CD8-positive, alpha-beta T cell (primary cell): ENCODE measurements at regions of chr1 and their contacts with region 1.

Region 1: GRCh38 chr1:45303582-45304310 is 22.9 kb upstream of the HPDL start:
- DNase-seq: peak; percentile 95 to 98 (median 98)
- ATAC-seq: peak; percentile 88
- H3K4me3 ChIP-seq: peak overlapping the region; percentile 85 to 93
- H3K4me3 Mint-ChIP-seq: peak overlapping the region; percentile 91
- H3K27ac ChIP-seq: peak overlapping the region; percentile 89 to 95
- H3K27ac Mint-ChIP-seq: peak overlapping the region; percentile 98
- H3K4me1 ChIP-seq: peaks cover 9% of the 10 kb centered on the region
- H3K4me1 Mint-ChIP-seq: peaks cover 23% of the 10 kb centered on the region
- H3K27me3 ChIP-seq: no peaks in the 10 kb centered on the region
- H3K27me3 Mint-ChIP-seq: no peaks in the 10 kb centered on the region
- CTCF ChIP-seq: peak; percentile 66

Region 2: DNA sequence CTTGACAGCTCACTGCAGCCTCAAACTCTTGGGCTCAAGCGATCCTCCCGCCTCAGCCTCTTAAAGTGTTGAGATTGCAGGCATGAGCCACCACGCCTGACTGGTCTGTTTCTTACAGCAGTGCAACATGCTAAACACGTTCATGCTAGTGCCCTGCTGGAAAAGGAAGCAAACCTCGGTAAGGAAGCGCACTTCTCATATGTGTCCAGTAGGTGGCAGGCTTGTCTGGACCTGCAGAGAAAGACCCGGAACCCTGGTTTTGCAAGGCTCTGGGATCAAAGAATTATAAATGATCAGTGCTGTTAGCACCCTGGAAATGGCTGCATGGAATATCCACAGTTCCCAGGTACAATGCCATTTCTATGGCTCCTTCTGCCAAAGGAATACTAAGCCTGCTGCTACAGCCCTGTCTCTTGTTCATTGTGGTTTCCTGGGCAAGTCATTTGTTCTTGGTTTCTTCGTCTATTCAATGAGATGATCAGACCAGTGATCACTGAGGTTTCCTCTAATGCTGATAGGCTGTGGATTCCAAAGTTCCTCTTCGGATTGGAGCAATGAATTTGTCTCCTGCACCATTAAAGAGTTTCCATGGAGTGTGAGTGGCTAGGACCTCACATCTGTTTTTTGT is 588.7 kb before region 1 on chr1:
- CTCF ChIA-PET with region 1: no interaction called
- POLR2A ChIA-PET with region 1: no interaction called
- intact Hi-C with region 1: loop called in 1 of 2 experiments (anchors 5 kb)
- DNase-seq: peak; percentile 37 to 87 (median 63)
- ATAC-seq: peak; percentile 94
- H3K4me3 ChIP-seq: peak overlapping the region in 1 of 2 experiments; percentile 1
- H3K4me3 Mint-ChIP-seq: peak overlapping the region; percentile 64
- H3K27ac ChIP-seq: no peak overlapping the region
- H3K27ac Mint-ChIP-seq: peak overlapping the region; percentile 37
- H3K4me1 ChIP-seq: peaks cover 44% of the 10 kb centered on the region
- H3K4me1 Mint-ChIP-seq: peaks cover 44% of the 10 kb centered on the region
- H3K27me3 ChIP-seq: no peaks in the 10 kb centered on the region
- H3K27me3 Mint-ChIP-seq: no peaks in the 10 kb centered on the region
- CTCF ChIP-seq: peak; percentile 96

Region 3: GRCh38 chr1:44786138-44786840 is 517.5 kb before region 1 on chr1:
- CTCF ChIA-PET with region 1: no interaction called
- POLR2A ChIA-PET with region 1: no interaction called
- intact Hi-C with region 1: loop called (anchors 1 to 2 kb)
- DNase-seq: peak in 8 of 9 experiments; percentile 63 to 89 (median 78)
- ATAC-seq: peak; percentile 85
- H3K4me3 ChIP-seq: peak overlapping the region; percentile 56 to 94
- H3K4me3 Mint-ChIP-seq: peak overlapping the region; percentile 82
- H3K27ac ChIP-seq: peak overlapping the region; percentile 33 to 63
- H3K27ac Mint-ChIP-seq: peak overlapping the region; percentile 86
- H3K4me1 ChIP-seq: peaks cover 34% of the 10 kb centered on the region
- H3K4me1 Mint-ChIP-seq: peaks cover 29% of the 10 kb centered on the region
- H3K27me3 ChIP-seq: no peaks in the 10 kb centered on the region
- H3K27me3 Mint-ChIP-seq: no peaks in the 10 kb centered on the region
- CTCF ChIP-seq: peak; percentile 100

Region 4: DNA sequence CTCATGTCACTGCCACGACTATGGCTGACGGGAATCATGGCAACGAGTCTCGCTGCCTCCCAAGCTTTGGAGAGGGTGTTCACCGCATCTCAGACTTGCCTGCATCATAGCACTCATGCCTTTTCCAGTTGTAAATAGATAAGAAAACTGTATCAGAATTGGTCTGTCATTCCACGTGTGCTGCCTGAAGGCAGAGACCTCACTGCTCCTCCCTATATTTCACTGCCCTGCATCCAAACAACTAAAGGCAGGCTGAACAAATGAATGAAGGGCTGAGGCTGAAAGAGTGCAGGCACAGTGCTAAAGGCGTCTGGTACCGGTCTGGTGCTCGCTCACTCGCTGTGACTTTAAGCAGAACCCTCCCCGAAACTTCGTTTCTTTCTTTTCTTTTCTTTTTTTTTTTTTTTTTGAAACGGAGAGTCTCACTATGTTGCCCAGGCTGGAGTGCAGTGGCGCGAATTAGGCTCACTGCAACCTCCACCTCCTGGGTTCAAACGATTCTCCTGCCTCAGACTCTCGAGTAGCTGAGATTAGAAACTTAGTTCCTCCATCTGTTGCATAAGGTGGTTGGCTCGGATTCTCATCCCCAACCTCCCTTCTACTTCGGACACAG is 317.9 kb before region 1 on chr1:
- CTCF ChIA-PET with region 1: interaction called, 5 read pairs
- POLR2A ChIA-PET with region 1: interaction called, 15 read pairs
- intact Hi-C with region 1: loop called (anchors 1 kb)
- DNase-seq: no peak
- ATAC-seq: no peak
- H3K4me3 ChIP-seq: peak overlapping the region; percentile 70 to 85
- H3K4me3 Mint-ChIP-seq: peak overlapping the region; percentile 97
- H3K27ac ChIP-seq: peak overlapping the region; percentile 31 to 42
- H3K27ac Mint-ChIP-seq: peak overlapping the region; percentile 93
- H3K4me1 ChIP-seq: peaks cover 15% of the 10 kb centered on the region
- H3K4me1 Mint-ChIP-seq: peaks cover 30% of the 10 kb centered on the region
- H3K27me3 ChIP-seq: no peaks in the 10 kb centered on the region
- H3K27me3 Mint-ChIP-seq: no peaks in the 10 kb centered on the region
- CTCF ChIP-seq: no peak

Region 5: DNA sequence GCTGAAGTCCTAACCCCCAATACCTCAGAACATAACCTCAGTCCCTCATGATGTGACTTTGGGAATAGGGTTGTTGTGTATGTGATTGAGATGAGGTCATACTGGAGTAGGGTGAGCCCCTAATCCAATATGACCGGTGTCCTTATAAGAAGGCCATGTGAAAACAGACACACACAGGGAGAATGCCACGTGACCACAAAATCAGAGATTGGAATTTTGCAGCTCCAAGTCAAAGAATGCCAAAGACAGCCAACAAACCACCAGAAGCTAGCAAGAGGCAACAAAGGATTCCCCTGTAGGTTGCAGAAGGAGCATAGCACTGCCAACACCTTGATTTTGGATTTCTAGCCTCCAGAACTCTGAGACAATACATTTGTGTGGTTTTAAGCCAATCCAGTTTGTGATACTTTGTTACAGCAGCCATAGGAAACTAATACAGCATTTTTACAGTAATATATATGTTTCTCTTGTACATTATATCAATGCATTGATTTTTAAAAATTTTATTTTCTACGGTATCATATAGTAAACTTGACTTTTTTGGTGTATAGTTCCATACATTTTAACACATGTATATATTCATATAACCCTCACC is 102.7 kb before region 1 on chr1:
- CTCF ChIA-PET with region 1: no interaction called
- POLR2A ChIA-PET with region 1: no interaction called
- intact Hi-C with region 1: loop called in 1 of 2 experiments (anchors 5 kb)
- DNase-seq: peak in 1 of 9 experiments; percentile 6
- ATAC-seq: no peak
- H3K4me3 ChIP-seq: no peak overlapping the region
- H3K4me3 Mint-ChIP-seq: no peak overlapping the region
- H3K27ac ChIP-seq: no peak overlapping the region
- H3K27ac Mint-ChIP-seq: no peak overlapping the region
- H3K4me1 ChIP-seq: peaks cover 20% of the 10 kb centered on the region
- H3K4me1 Mint-ChIP-seq: peaks cover 24% of the 10 kb centered on the region
- H3K27me3 ChIP-seq: no peaks in the 10 kb centered on the region
- H3K27me3 Mint-ChIP-seq: peaks cover 3% of the 10 kb centered on the region
- CTCF ChIP-seq: no peak

Region 6: DNA sequence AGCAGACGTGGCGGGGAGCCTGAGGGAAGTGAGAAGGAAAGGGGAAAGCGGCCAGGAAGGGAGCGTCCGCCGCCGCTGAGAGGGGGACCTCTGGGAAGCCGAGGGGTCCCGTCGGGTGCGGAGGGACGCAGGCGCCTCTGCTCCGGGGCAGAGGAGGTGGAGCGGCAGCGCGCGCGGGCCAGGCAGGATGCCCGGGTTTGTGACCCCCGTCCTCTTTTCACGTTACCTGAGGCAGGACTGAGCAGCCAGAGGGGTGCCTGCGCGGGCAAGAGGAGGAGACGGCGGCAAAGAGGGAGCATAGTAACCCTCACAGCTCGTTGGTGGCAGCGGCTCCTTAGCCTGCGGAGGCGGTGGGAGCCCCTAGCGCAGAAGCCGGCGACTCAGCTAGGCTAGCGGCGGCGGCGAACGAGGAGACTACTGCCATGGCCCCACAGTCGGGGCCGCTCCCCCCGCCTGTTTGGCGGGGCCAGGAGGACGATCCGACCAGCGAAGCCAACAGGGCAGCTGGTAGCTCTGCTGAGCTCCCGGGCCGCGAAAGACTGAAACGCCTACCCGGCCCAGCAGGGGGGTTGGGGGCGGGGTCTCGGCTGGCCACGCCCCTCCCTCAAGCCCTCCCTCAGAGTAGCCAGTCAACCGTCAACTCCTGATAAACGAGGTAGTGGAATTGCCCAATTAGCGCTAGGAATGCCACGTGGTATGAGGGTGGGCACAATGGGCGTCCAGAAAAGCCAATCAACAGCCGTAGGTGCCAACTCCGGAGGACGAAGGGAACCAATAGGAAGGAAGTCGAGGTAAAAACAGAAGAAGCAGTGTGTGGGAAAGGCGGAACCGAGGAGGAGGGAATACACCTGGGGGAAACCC is 187.1 kb after region 1 on chr1 and contains the start of gene TESK2:
- CTCF ChIA-PET with region 1: interaction called, 8 read pairs
- POLR2A ChIA-PET with region 1: interaction called, 5 read pairs
- intact Hi-C with region 1: loop called (anchors 1 kb)
- DNase-seq: peak; percentile 94 to 100 (median 95)
- ATAC-seq: peak; percentile 91
- H3K4me3 ChIP-seq: peak within 1 kb of the TSS; percentile 74 to 91
- H3K4me3 Mint-ChIP-seq: no peak within 1 kb of the TSS
- H3K27ac ChIP-seq: peak within 1 kb of the TSS; percentile 49 to 72
- H3K27ac Mint-ChIP-seq: no peak within 1 kb of the TSS
- H3K4me1 ChIP-seq: peaks cover 11% of the 10 kb centered on the region
- H3K4me1 Mint-ChIP-seq: peaks cover 16% of the 10 kb centered on the region
- H3K27me3 ChIP-seq: peaks cover 0 to 3% of the 10 kb centered on the region in 2 experiments
- H3K27me3 Mint-ChIP-seq: no peaks in the 10 kb centered on the region
- CTCF ChIP-seq: no peak
- total RNA-seq, gene TESK2: 4.6 to 5.8 TPM

Region 7: GRCh38 chr1:46197964-46198811 is 894.4 kb after region 1 on chr1 and contains the start of gene POMGNT1:
- CTCF ChIA-PET with region 1: no interaction called
- POLR2A ChIA-PET with region 1: no interaction called
- intact Hi-C with region 1: loop called (anchors 5 kb)
- DNase-seq: peak; percentile 50 to 86 (median 72)
- ATAC-seq: peak; percentile 93
- H3K4me3 ChIP-seq: peak within 1 kb of the TSS; percentile 75 to 93
- H3K4me3 Mint-ChIP-seq: peak within 1 kb of the TSS; percentile 83
- H3K27ac ChIP-seq: peak within 1 kb of the TSS; percentile 58 to 59
- H3K27ac Mint-ChIP-seq: peak within 1 kb of the TSS; percentile 88
- H3K4me1 ChIP-seq: peaks cover 20% of the 10 kb centered on the region
- H3K4me1 Mint-ChIP-seq: peaks cover 32% of the 10 kb centered on the region
- H3K27me3 ChIP-seq: peaks cover 0 to 3% of the 10 kb centered on the region in 2 experiments
- H3K27me3 Mint-ChIP-seq: no peaks in the 10 kb centered on the region
- CTCF ChIP-seq: no peak
- total RNA-seq, gene POMGNT1: 20.3 to 23.4 TPM